ENCODE measurements at regions of chr3 and their contacts with region 1.

Region 1: DNA sequence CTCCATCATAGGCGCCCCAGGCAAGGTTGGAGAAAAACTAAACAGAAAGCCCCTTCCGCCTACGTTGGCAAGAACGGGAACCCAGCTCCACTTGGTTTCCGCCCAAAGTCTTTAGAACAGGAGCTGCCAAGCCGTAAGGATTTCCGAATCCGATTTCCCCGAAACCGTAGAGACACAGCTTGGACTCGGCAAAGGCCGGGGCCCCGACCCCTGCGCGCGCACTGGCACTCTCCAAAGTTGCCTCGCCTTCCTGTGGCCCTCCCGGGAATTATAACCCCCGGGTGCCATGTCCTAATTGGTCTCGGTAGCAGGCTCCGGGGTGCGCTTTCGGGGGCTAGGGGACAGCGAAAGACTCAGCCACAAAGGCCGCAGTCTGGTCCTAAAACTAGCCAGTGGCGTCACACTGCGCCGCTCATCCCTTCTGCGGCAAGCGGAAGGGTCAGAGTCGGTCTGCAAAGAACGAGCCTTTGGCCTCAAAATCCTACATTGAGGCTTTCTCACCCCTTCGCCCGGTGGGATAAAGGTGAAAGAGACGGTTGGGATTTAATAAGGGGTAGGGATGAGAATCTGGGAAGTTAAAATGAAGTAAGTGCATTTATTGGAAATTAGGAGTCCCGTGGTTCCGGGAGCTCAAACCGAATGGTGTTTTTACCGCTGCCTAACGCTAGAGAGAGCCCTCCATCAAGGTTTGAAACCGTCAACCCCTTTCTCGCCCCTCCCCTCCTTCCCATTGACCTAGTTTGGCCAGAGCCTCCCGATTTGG is 6.8 kb downstream of the BCL6 start:
- DNase-seq: peak; percentile 82
- ATAC-seq: peak; percentile 50
- H3K4me3 Mint-ChIP-seq: peak overlapping the region; percentile 93
- H3K27ac Mint-ChIP-seq: peak overlapping the region; percentile 98
- H3K4me1 Mint-ChIP-seq: peaks cover 47% of the 10 kb centered on the region
- H3K27me3 Mint-ChIP-seq: no peaks in the 10 kb centered on the region
- CTCF ChIP-seq: peak; percentile 79

Region 2: GRCh38 chr3:187628169-187628568 is 110.3 kb before region 1 on chr3:
- CTCF ChIA-PET with region 1: no interaction called
- POLR2A ChIA-PET with region 1: no interaction called
- intact Hi-C with region 1: no loop called
- DNase-seq: no peak
- ATAC-seq: no peak
- H3K4me3 Mint-ChIP-seq: no peak overlapping the region
- H3K27ac Mint-ChIP-seq: no peak overlapping the region
- H3K4me1 Mint-ChIP-seq: no peaks in the 10 kb centered on the region
- H3K27me3 Mint-ChIP-seq: peaks cover under 1% of the 10 kb centered on the region
- CTCF ChIP-seq: no peak

Region 3: GRCh38 chr3:187870360-187871203 is 132.1 kb after region 1 on chr3:
- CTCF ChIA-PET with region 1: interaction called, 11 read pairs
- POLR2A ChIA-PET with region 1: no interaction called
- intact Hi-C with region 1: no loop called
- DNase-seq: peak; percentile 42
- ATAC-seq: peak; percentile 86
- H3K4me3 Mint-ChIP-seq: peak overlapping the region; percentile 14
- H3K27ac Mint-ChIP-seq: peak overlapping the region; percentile 80
- H3K4me1 Mint-ChIP-seq: peaks cover 18% of the 10 kb centered on the region
- H3K27me3 Mint-ChIP-seq: no peaks in the 10 kb centered on the region
- CTCF ChIP-seq: no peak

Region 4: DNA sequence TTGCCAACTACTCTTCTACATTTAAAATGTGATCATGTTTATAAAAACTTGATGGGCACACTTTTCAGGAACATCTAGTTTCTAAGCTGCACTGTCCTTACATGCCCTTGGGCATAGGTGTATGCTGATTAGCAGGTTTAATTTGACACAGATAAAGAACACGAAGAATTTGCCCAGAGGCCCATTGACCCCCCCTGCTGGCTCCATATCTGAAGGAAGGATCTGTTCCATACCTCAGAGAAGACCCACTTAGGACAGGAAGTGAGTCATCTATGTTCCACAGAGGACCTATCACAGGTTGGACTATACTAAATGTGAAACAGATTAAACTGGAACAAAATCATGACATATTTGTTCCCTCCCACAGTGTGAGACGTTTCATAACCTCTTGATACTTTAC is 322.6 kb after region 1 on chr3:
- CTCF ChIA-PET with region 1: interaction called, 13 read pairs
- POLR2A ChIA-PET with region 1: no interaction called
- intact Hi-C with region 1: no loop called
- DNase-seq: peak; percentile 87
- ATAC-seq: peak; percentile 98
- H3K4me3 Mint-ChIP-seq: no peak overlapping the region
- H3K27ac Mint-ChIP-seq: peak overlapping the region; percentile 87
- H3K4me1 Mint-ChIP-seq: peaks cover 38% of the 10 kb centered on the region
- H3K27me3 Mint-ChIP-seq: no peaks in the 10 kb centered on the region
- CTCF ChIP-seq: peak; percentile 25

Region 5: GRCh38 chr3:188257384-188258026 is 519.0 kb after region 1 on chr3:
- CTCF ChIA-PET with region 1: interaction called, 11 read pairs
- POLR2A ChIA-PET with region 1: interaction called, 5 read pairs
- intact Hi-C with region 1: loop called (anchors 10 kb)
- DNase-seq: no peak
- ATAC-seq: no peak
- H3K4me3 Mint-ChIP-seq: no peak overlapping the region
- H3K27ac Mint-ChIP-seq: no peak overlapping the region
- H3K4me1 Mint-ChIP-seq: peaks cover 39% of the 10 kb centered on the region
- H3K27me3 Mint-ChIP-seq: no peaks in the 10 kb centered on the region
- CTCF ChIP-seq: no peak

Region 6: GRCh38 chr3:188362405-188362831 is 623.9 kb after region 1 on chr3:
- CTCF ChIA-PET with region 1: interaction called, 25 read pairs
- POLR2A ChIA-PET with region 1: no interaction called
- intact Hi-C with region 1: no loop called
- DNase-seq: peak; percentile 63
- ATAC-seq: peak; percentile 77
- H3K4me3 Mint-ChIP-seq: peak overlapping the region; percentile 52
- H3K27ac Mint-ChIP-seq: peak overlapping the region; percentile 81
- H3K4me1 Mint-ChIP-seq: peaks cover 49% of the 10 kb centered on the region
- H3K27me3 Mint-ChIP-seq: no peaks in the 10 kb centered on the region
- CTCF ChIP-seq: no peak

Region 7: DNA sequence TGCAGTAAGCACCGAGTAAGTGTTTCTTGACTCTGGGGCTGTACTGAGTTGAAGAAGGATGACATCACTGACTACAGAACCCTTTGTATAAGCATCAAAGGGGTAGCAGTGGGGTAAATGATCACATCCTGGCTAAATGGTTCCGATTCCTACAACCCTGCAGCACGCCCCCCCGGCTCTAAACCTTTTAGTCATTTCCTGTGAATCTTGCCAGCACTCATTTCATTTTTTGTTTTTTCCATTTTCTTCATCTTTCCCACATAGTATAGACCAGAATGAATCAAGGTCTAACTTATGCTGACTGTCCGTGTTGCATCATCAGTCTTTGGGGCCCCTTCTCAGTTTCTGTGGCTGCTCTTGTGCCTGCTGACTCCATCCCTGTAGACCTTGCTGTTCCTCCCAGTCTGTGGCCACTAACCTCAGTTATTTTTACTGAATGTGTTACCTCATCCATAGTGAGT is 1050.1 kb after region 1 on chr3:
- CTCF ChIA-PET with region 1: interaction called, 7 read pairs
- POLR2A ChIA-PET with region 1: no interaction called
- intact Hi-C with region 1: loop called (anchors 2 kb)
- DNase-seq: peak; percentile 94
- ATAC-seq: peak; percentile 97
- H3K4me3 Mint-ChIP-seq: no peak overlapping the region
- H3K27ac Mint-ChIP-seq: no peak overlapping the region
- H3K4me1 Mint-ChIP-seq: peaks cover 2% of the 10 kb centered on the region
- H3K27me3 Mint-ChIP-seq: no peaks in the 10 kb centered on the region
- CTCF ChIP-seq: no peak

Region 8: GRCh38 chr3:189148081-189148507 is 1409.6 kb after region 1 on chr3:
- CTCF ChIA-PET with region 1: interaction called, 73 read pairs
- POLR2A ChIA-PET with region 1: no interaction called
- intact Hi-C with region 1: loop called (anchors 5 kb)
- DNase-seq: peak; percentile 81
- ATAC-seq: peak; percentile 88
- H3K4me3 Mint-ChIP-seq: no peak overlapping the region
- H3K27ac Mint-ChIP-seq: no peak overlapping the region
- H3K4me1 Mint-ChIP-seq: peaks cover 24% of the 10 kb centered on the region
- H3K27me3 Mint-ChIP-seq: no peaks in the 10 kb centered on the region
- CTCF ChIP-seq: peak; percentile 83